ENCODE measurements at regions of chr5 and their contacts with region 1.

Region 1: DNA sequence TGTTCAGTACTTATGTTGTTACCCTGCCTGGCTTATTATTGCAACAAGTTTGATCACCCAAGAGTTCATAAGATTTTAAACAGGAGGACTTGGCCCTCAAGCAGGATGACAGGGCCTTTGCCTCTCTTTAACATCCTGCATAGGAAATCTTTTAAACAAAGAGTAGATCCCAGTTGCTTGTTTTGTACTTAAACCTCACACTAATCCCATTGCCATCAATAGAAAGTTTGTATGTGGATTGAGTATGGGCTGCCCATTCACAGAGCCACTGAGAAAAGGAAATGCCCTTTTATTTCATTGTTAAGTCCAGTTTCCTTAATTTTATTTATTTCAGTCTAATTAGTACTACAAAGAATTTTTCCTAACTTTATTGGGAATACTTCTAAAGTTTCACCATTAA is 52.2 kb upstream of the FGF10 start:
- DNase-seq: no peak
- H3K4me3 ChIP-seq: no peak overlapping the region
- H3K27ac ChIP-seq: no peak overlapping the region
- H3K4me1 ChIP-seq: no peaks in the 10 kb centered on the region
- H3K27me3 ChIP-seq: no peaks in the 10 kb centered on the region
- CTCF ChIP-seq: no peak
- EP300 ChIP-seq: no peak
- POLR2A ChIP-seq: no peak

Region 2: GRCh38 chr5:44412286-44412685 is 29.2 kb before region 1 on chr5:
- in situ Hi-C with region 1: no loop called
- intact Hi-C with region 1: loop called (anchors 1 kb)
- DNase-seq: no peak
- H3K4me3 ChIP-seq: no peak overlapping the region
- H3K27ac ChIP-seq: no peak overlapping the region
- H3K4me1 ChIP-seq: no peaks in the 10 kb centered on the region
- H3K27me3 ChIP-seq: no peaks in the 10 kb centered on the region
- CTCF ChIP-seq: no peak
- EP300 ChIP-seq: no peak
- POLR2A ChIP-seq: no peak

Region 3: GRCh38 chr5:44426944-44427343 is 14.5 kb before region 1 on chr5:
- in situ Hi-C with region 1: no loop called
- intact Hi-C with region 1: no loop called
- DNase-seq: no peak
- H3K4me3 ChIP-seq: no peak overlapping the region
- H3K27ac ChIP-seq: no peak overlapping the region
- H3K4me1 ChIP-seq: no peaks in the 10 kb centered on the region
- H3K27me3 ChIP-seq: no peaks in the 10 kb centered on the region
- CTCF ChIP-seq: no peak
- EP300 ChIP-seq: no peak
- POLR2A ChIP-seq: no peak

Region 4: GRCh38 chr5:45189481-45189880 is 748.0 kb after region 1 on chr5:
- in situ Hi-C with region 1: no loop called
- intact Hi-C with region 1: no loop called
- DNase-seq: no peak
- H3K4me3 ChIP-seq: no peak overlapping the region
- H3K27ac ChIP-seq: no peak overlapping the region
- H3K4me1 ChIP-seq: no peaks in the 10 kb centered on the region
- H3K27me3 ChIP-seq: no peaks in the 10 kb centered on the region
- CTCF ChIP-seq: no peak
- EP300 ChIP-seq: no peak
- POLR2A ChIP-seq: no peak

Measured in transverse colon (tissue), 4 donors.